H1 (cell line): ENCODE measurements at regions of chr17 and their contacts with region 1.

Region 1: GRCh38 chr17:81733507-81734404 is 21.7 kb downstream of the SLC25A10 start:
- DNase-seq: peak in 1 of 2 experiments; percentile 97
- H3K4me3 ChIP-seq: no peak overlapping the region
- H3K27ac ChIP-seq: no peak overlapping the region
- H3K4me1 ChIP-seq: peaks cover 0 to 17% (median 5%) of the 10 kb centered on the region in 4 experiments; a peak in 5 of 7 replicates
- H3K27me3 ChIP-seq: no peaks in the 10 kb centered on the region; a peak in 1 of 7 replicates
- CTCF ChIP-seq: peak; percentile 90 to 96 (median 92)
- EP300 ChIP-seq: no peak
- POLR2A ChIP-seq: no peak
- RAD21 ChIP-seq: peak; percentile 97 to 98

Region 2: GRCh38 chr17:81722184-81723120 is 11.3 kb before region 1 on chr17:
- CTCF ChIA-PET with region 1: interaction called, 14 read pairs
- POLR2A ChIA-PET with region 1: interaction called, 6 read pairs
- DNase-seq: peak in 1 of 2 experiments; percentile 52
- H3K4me3 ChIP-seq: no peak overlapping the region
- H3K27ac ChIP-seq: no peak overlapping the region
- H3K4me1 ChIP-seq: peaks cover 0 to 10% (median 3%) of the 10 kb centered on the region in 4 experiments; a peak in 5 of 7 replicates
- H3K27me3 ChIP-seq: no peaks in the 10 kb centered on the region
- CTCF ChIP-seq: no peak
- EP300 ChIP-seq: no peak
- POLR2A ChIP-seq: no peak
- RAD21 ChIP-seq: no peak

Region 3: DNA sequence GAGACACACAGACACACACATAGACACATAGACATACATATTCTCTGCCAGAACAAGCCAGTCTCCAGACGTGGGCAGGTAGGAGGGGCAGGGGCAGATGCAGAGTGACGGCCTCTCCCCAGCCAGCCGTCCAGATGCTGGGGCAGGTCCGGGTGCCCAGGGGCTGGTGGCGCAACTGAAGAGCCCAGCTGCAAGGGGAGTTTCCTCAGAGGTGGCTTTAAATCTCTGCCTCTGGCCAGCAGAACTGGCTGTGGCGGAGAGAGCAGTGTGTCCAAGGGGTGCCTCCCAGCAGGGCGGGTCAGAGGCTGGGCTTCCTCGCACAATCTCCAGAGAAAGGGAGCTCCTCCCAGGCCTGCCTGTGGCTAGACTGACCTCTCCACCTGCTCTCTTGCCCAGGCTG is 60.8 kb after region 1 on chr17:
- CTCF ChIA-PET with region 1: interaction called, 10 read pairs
- POLR2A ChIA-PET with region 1: interaction called, 5 read pairs
- DNase-seq: no peak
- H3K4me3 ChIP-seq: no peak overlapping the region
- H3K27ac ChIP-seq: no peak overlapping the region
- H3K4me1 ChIP-seq: no peaks in the 10 kb centered on the region
- H3K27me3 ChIP-seq: peaks cover 0 to 4% (median 0%) of the 10 kb centered on the region in 4 experiments; a peak in 1 of 7 replicates
- CTCF ChIP-seq: no peak
- EP300 ChIP-seq: no peak
- POLR2A ChIP-seq: no peak
- RAD21 ChIP-seq: no peak

Region 4: GRCh38 chr17:81821603-81822311 is 88.0 kb after region 1 on chr17:
- CTCF ChIA-PET with region 1: interaction called, 10 read pairs
- POLR2A ChIA-PET with region 1: interaction called, 4 read pairs
- DNase-seq: peak in 1 of 2 experiments; percentile 80
- H3K4me3 ChIP-seq: no peak overlapping the region
- H3K27ac ChIP-seq: no peak overlapping the region
- H3K4me1 ChIP-seq: peaks cover 0 to 16% (median 9%) of the 10 kb centered on the region in 4 experiments; a peak in 6 of 7 replicates
- H3K27me3 ChIP-seq: no peaks in the 10 kb centered on the region
- CTCF ChIP-seq: peak; percentile 45 to 50 (median 48)
- EP300 ChIP-seq: no peak
- POLR2A ChIP-seq: no peak
- RAD21 ChIP-seq: peak in 1 of 2 experiments; percentile 42; a peak in 2 of 4 replicates

Region 5: GRCh38 chr17:81854974-81855774 is 121.4 kb after region 1 on chr17:
- CTCF ChIA-PET with region 1: interaction called, 21 read pairs
- POLR2A ChIA-PET with region 1: interaction called, 3 read pairs
- DNase-seq: no peak
- H3K4me3 ChIP-seq: no peak overlapping the region
- H3K27ac ChIP-seq: no peak overlapping the region
- H3K4me1 ChIP-seq: peaks cover 0 to 5% (median 5%) of the 10 kb centered on the region in 4 experiments; a peak in 5 of 7 replicates
- H3K27me3 ChIP-seq: no peaks in the 10 kb centered on the region; a peak in 1 of 7 replicates
- CTCF ChIP-seq: peak in 1 of 3 experiments; percentile 38; a peak in 2 of 4 replicates
- EP300 ChIP-seq: no peak
- POLR2A ChIP-seq: no peak
- RAD21 ChIP-seq: peak; percentile 51 to 60